CD14-positive monocyte (primary cell): ENCODE measurements at regions of chr4 and their contacts with region 1.

Region 1: DNA sequence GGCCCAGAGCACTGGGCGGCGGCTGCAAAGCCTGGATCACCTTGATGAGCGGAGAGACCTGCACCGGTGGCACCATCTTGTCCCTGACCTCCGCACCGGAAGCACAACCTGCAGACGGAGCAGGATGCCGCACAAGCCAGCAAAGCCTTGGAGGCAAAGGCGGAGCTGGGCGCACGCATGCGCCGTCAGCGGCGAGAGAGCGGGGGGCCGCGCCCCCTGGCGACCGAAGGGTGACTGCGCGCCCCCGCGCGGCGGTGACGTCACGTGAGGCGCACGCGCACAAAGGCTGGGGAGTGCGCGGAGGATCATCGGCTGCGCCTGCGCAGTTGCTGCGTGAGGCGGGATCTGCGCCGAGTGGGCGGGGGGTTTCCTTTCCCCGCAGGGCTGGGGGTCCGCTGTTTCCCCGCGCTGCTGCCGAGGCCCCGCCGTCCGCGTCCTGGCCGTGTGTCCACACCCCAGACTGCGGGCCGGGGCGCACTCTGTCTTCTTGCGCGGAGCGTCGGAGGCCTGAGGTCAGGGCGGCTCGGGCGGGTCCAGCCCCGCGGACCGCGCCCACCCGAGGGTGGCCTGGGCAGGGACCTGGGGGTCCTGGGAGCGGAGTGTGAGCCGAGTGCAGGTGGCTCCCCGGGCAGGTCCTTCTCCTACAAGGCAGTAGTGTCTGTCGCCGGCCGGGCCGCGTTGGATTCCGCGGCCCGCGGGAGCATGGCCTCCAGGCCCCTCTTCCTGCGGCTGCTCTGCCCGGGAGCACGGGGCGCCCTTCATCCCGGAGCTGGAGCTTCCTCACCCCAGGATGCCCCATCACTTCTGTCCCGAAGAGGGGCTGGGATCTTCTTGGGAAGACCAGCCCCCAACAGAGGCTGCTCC is at the starts of genes ATP5ME and MYL5:
- DNase-seq: peak; percentile 94 to 96 (median 96)
- H3K4me3 ChIP-seq: peak within 1 kb of the TSS; percentile 77 to 92 (median 84)
- H3K4me3 Mint-ChIP-seq: peak within 1 kb of the TSS; percentile 77 to 86
- H3K27ac ChIP-seq: peak within 1 kb of the TSS; percentile 56 to 96
- H3K27ac Mint-ChIP-seq: peak within 1 kb of the TSS; percentile 82 to 92 (median 85)
- H3K4me1 ChIP-seq: peaks cover 19 to 23% of the 10 kb centered on the region in 2 donors
- H3K4me1 Mint-ChIP-seq: peaks cover 13% of the 10 kb centered on the region
- H3K27me3 ChIP-seq: no peaks in the 10 kb centered on the region
- H3K27me3 Mint-ChIP-seq: peaks cover 2 to 6% (median 5%) of the 10 kb centered on the region in 3 donors
- CTCF ChIP-seq: peak; percentile 93
- polyA plus RNA-seq, gene ATP5ME: 163 to 397 (median 367) TPM
- polyA plus RNA-seq, gene MYL5: 4.2 to 12.6 (median 7.2) TPM

Region 2: GRCh38 chr4:498328-498904 is 176.0 kb before region 1 on chr4:
- intact Hi-C with region 1: loop called in 1 of 2 experiments (anchors 10 kb)
- DNase-seq: no peak
- H3K4me3 ChIP-seq: peak overlapping the region; percentile 84 to 97 (median 89)
- H3K4me3 Mint-ChIP-seq: peak overlapping the region; percentile 93 to 94
- H3K27ac ChIP-seq: peak overlapping the region; percentile 71 to 92
- H3K27ac Mint-ChIP-seq: peak overlapping the region; percentile 90 to 98 (median 97)
- H3K4me1 ChIP-seq: peaks cover 10 to 15% of the 10 kb centered on the region in 2 donors
- H3K4me1 Mint-ChIP-seq: peaks cover 14% of the 10 kb centered on the region
- H3K27me3 ChIP-seq: no peaks in the 10 kb centered on the region
- H3K27me3 Mint-ChIP-seq: peaks cover 0 to 3% (median 0%) of the 10 kb centered on the region in 3 donors
- CTCF ChIP-seq: no peak

Region 3: GRCh38 chr4:705278-706082 is 31.1 kb after region 1 on chr4 and contains the start of gene PCGF3:
- intact Hi-C with region 1: loop called in 1 of 2 experiments (anchors 5 kb)
- DNase-seq: peak; percentile 92 to 96 (median 93)
- H3K4me3 ChIP-seq: peak within 1 kb of the TSS; percentile 60 to 94 (median 86)
- H3K4me3 Mint-ChIP-seq: peak within 1 kb of the TSS; percentile 78 to 88
- H3K27ac ChIP-seq: peak within 1 kb of the TSS; percentile 40 to 96
- H3K27ac Mint-ChIP-seq: peak within 1 kb of the TSS; percentile 69 to 97 (median 92)
- H3K4me1 ChIP-seq: peaks cover 41 to 58% of the 10 kb centered on the region in 2 donors
- H3K4me1 Mint-ChIP-seq: peaks cover 34% of the 10 kb centered on the region
- H3K27me3 ChIP-seq: no peaks in the 10 kb centered on the region
- H3K27me3 Mint-ChIP-seq: peaks cover 2 to 4% (median 3%) of the 10 kb centered on the region in 3 donors
- CTCF ChIP-seq: no peak
- polyA plus RNA-seq, gene PCGF3: 7.0 to 163 (median 8.3) TPM